Endothelial cell of umbilical vein (primary cell): ENCODE measurements at regions of chr10 and their contacts with region 1.

Region 1: DNA sequence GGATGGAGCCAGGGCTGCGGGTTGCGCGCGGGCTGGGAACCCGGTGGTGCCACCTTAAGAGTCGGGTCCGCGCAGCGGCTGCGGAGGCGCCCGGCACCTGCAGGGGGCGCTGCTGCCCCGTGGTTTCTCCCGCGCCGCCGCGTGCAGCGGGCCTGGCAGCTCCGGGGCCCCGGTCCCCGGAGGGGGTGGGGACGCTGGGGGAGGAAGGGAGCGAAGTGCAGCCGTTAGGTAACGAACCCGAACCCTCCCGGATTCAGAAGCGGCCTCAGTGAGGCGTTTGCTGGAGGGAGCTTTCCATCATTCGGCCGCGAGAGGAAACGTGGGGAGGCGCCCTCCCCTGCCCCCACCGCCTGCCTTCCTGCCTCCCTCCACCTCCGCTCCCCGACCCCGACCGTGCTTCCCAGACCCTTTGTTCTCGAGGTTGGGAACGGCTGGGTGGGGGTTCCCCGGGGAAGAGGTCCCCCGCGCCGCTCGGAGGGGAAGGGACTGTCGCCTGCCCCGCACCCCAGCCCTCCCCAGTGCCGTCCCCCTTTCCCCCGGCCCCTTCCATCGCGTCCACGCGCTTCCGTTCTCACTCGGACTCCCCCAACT is 29.6 kb downstream of the SKIDA1 start:
- DNase-seq: peak; percentile 88
- H3K4me3 ChIP-seq: peak overlapping the region; percentile 79 to 94 (median 86)
- H3K27ac ChIP-seq: peak overlapping the region; percentile 49
- H3K4me1 ChIP-seq: peaks cover 12% of the 10 kb centered on the region
- H3K27me3 ChIP-seq: peaks cover 9 to 29% of the 10 kb centered on the region in 2 experiments
- CTCF ChIP-seq: peak; percentile 88 to 95
- POLR2A ChIP-seq: peak; percentile 64

Region 2: DNA sequence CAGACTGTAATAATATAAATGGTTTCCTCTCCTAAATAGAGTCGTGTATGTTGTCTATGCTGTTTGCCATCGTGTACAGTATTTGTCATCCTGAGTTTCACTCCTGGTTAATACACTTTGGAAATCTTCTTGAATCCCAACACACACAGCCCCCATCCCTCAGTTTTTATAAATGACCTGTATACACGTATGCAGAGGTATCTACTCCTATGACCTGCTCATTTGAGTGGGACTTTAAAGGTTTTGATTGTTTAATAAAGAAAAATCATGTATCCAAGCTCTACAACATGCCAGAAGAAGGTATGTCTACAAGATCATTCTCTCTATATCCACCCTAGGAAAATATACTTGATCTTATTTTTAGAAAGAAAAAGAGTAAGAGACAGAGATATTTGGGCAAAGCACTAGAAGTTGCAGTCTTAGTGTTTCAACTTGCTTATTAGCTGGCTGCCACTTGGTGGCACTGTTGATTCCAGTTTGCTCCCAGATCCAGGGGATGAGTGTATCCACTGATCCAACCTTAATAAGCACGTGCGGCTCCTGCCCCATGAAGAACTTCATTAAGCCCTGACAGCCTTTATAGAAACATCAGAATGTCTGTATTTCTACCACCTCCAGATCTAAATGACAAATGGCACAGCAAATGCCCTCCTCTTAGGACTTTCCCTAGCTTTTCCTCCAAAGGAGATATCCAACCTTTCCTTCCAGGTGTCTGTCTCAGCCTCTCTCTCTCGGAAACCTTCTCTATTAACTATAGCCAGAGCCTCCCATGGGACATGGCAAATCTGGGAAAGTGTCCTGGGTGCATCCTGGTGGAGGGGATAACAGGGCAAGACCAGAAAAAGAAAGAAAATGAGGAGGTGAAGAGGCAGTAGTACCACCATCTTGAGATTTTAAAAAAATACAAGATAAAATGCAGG is 417.2 kb before region 1 on chr10:
- CTCF ChIA-PET with region 1: interaction called, 4 read pairs
- POLR2A ChIA-PET with region 1: no interaction called
- dilution Hi-C with region 1: no loop called
- intact Hi-C with region 1: loop called (anchors 1 kb)
- DNase-seq: peak; percentile 72
- H3K4me3 ChIP-seq: no peak overlapping the region
- H3K27ac ChIP-seq: no peak overlapping the region
- H3K4me1 ChIP-seq: no peaks in the 10 kb centered on the region
- H3K27me3 ChIP-seq: peaks cover 5 to 8% of the 10 kb centered on the region in 2 experiments
- CTCF ChIP-seq: peak; percentile 67 to 73
- POLR2A ChIP-seq: no peak

Region 3: DNA sequence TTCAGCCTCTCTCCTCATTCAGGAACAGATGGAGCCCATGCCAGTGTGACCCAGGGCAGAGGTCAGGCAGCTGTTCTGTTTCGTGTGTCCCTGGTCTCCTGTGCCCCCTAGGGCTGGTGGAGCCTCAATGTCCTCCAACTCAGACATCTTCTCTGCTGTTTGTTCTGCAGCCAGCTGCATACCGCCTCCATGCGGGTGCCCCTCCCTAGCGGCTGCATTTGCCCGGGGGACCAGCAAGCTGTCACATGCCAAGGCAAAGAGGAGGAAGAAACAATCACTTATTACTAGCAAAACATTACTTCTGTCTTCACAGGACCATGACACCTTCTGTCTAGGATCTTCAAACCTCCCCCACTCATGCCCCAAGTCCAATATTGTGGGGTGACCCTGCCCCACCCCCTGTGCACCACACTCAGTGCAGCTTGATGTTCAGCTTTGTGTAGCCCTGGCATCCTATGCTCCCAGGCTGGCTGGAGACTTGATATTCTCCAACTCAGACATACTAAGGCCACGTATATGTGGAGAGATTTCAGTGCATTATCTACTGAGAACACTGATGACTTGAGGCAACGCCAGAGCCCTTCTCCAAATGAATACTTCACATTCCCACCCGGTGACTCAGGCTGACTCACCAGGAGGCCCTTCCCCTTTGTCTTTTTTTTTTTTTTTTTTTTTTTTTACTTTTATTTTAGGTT is 159.2 kb before region 1 on chr10:
- CTCF ChIA-PET with region 1: interaction called, 9 read pairs
- POLR2A ChIA-PET with region 1: no interaction called
- dilution Hi-C with region 1: no loop called
- intact Hi-C with region 1: loop called (anchors 1 kb)
- DNase-seq: peak; percentile 93
- H3K4me3 ChIP-seq: no peak overlapping the region
- H3K27ac ChIP-seq: peak overlapping the region; percentile 97
- H3K4me1 ChIP-seq: peaks cover 22% of the 10 kb centered on the region
- H3K27me3 ChIP-seq: no peaks in the 10 kb centered on the region
- CTCF ChIP-seq: peak; percentile 20 to 28
- POLR2A ChIP-seq: peak; percentile 20

Region 4: DNA sequence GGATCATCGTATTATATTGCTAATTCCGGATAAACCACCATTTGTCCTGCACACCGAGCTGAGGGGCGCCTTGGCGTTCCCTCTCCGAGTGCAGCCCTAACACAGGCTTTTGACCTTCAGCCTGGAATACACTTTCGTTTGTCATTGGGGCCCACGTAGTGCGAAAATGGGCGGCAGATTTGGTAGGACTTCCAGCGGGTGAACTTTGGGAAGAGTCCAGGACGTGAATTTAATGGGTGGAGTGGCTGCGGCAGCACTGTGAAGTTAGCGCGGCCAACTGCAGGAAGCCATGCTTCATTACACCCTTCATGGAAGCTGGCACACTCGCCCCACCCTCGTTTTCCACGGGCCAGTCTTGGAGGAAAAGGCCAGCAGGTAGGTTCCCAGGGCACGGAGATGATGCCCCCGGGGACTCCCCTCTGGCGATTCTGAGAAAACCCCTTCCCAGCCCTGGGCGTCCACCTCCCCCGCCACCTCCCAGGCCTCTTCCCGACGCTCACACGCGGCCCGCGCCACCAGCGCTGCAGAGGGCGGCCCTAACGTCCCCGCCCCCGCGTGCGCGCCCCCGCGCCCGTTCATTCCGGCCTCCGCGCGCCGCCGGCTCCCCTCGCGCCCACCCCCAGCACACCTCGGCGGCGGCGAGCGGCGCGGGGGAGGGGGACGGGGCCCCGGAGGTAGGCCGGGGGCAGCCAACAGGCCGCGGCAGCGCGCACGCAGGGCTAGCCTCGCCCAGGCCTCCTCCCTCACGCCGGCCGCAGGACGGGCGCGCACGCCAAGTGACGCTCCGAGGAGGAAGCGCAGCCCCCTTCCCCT is 37.8 kb after region 1 on chr10 and contains the start of gene MLLT10:
- CTCF ChIA-PET with region 1: interaction called, 11 read pairs
- POLR2A ChIA-PET with region 1: no interaction called
- dilution Hi-C with region 1: no loop called
- intact Hi-C with region 1: loop called (anchors 1 kb)
- DNase-seq: peak; percentile 97
- H3K4me3 ChIP-seq: peak within 1 kb of the TSS; percentile 80 to 93 (median 83)
- H3K27ac ChIP-seq: peak within 1 kb of the TSS; percentile 60
- H3K4me1 ChIP-seq: peaks cover 17% of the 10 kb centered on the region
- H3K27me3 ChIP-seq: no peaks in the 10 kb centered on the region
- CTCF ChIP-seq: no peak
- POLR2A ChIP-seq: peak; percentile 83
- total RNA-seq, gene MLLT10: 54.0 and 54.6 TPM in 2 replicates

Region 5: DNA sequence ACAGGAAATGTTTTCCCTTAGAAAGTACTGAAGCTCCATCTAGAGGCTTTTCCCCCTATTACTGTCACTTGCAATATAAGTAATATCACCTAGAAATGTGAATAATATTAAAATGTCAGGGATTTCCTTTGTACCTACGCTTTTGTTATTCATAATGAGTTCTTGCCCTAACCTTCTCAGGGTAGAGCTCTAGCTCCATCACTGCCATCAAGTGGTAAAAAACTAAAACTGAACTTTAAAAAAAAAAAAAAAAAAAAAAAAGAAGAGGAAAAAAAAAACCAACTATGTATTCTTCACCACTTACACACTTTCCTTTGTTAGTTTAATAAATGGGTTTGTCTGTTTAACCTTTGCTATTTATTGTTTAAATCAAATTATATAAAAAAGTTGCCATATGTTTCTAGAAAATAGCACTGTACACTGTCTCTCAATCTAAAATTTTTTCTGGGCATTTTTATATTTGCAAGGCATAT is 457.8 kb after region 1 on chr10:
- CTCF ChIA-PET with region 1: interaction called, 20 read pairs
- POLR2A ChIA-PET with region 1: interaction called, 10 read pairs
- dilution Hi-C with region 1: no loop called
- intact Hi-C with region 1: loop called (anchors 1 kb)
- DNase-seq: peak; percentile 70
- H3K4me3 ChIP-seq: no peak overlapping the region
- H3K27ac ChIP-seq: no peak overlapping the region
- H3K4me1 ChIP-seq: no peaks in the 10 kb centered on the region
- H3K27me3 ChIP-seq: no peaks in the 10 kb centered on the region
- CTCF ChIP-seq: peak in 1 of 2 donors; percentile 9
- POLR2A ChIP-seq: no peak

Region 6: DNA sequence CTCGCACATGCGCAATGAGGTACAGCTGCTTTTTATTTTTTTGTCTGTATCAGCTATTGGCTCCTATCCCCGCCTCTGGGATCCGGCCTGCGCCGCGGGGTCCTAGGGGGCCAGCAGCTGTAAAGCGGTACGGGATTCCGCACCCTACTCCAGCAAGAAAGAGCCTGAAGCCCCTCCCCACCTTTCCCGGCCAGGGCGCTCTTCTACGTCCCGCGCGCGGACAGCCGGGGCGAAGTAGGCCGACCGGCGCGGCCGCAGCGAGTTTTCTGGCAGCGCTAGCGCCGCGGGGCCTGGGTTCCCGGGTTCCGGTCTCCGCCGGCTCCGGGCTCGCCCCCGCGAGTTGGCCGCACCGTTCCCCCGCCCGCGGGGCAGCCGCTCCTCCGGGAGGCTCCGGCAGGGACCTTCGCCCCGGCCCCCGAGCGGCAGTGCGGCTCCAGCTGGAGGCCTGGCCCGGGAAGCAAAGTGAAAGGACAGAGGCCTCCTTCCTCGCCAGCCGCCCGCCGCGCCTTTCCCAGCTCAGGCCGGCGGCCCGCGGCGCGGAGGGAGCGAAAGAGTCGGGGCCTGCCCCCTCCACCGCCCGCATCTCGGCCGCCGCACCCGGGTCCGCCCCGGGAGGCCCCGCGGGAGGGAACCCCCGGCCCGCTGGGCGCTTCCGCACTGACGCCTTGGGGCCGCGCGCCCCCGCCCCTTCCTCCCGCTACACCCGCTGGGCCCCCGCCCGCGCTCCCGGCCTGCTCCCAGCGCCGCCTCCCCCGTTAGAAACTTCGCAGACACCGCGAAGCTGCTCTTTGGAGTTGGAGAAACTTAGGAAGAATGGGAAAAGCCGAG is 844.7 kb after region 1 on chr10:
- CTCF ChIA-PET with region 1: interaction called, 5 read pairs
- POLR2A ChIA-PET with region 1: no interaction called
- dilution Hi-C with region 1: no loop called
- intact Hi-C with region 1: loop called (anchors 5 kb)
- DNase-seq: peak; percentile 53
- H3K4me3 ChIP-seq: peak overlapping the region; percentile 78 to 81 (median 80)
- H3K27ac ChIP-seq: peak overlapping the region; percentile 63
- H3K4me1 ChIP-seq: peaks cover 13% of the 10 kb centered on the region
- H3K27me3 ChIP-seq: peaks cover 72 to 90% of the 10 kb centered on the region in 2 experiments
- CTCF ChIP-seq: no peak
- POLR2A ChIP-seq: peak; percentile 31

Region 7: GRCh38 chr10:23095404-23095965 is 1599.6 kb after region 1 on chr10 and contains the start of gene MSRB2:
- CTCF ChIA-PET with region 1: no interaction called
- POLR2A ChIA-PET with region 1: no interaction called
- dilution Hi-C with region 1: no loop called
- intact Hi-C with region 1: loop called (anchors 10 kb)
- DNase-seq: peak; percentile 90
- H3K4me3 ChIP-seq: peak within 1 kb of the TSS; percentile 52 to 91 (median 84)
- H3K27ac ChIP-seq: peak within 1 kb of the TSS; percentile 25
- H3K4me1 ChIP-seq: peaks cover 18% of the 10 kb centered on the region
- H3K27me3 ChIP-seq: peaks cover 1 to 10% of the 10 kb centered on the region in 2 experiments
- CTCF ChIP-seq: no peak
- POLR2A ChIP-seq: peak; percentile 89
- total RNA-seq, gene MSRB2: 16.2 and 19.4 TPM in 2 replicates